SK-N-SH (cell line): ENCODE measurements at regions of chr1 and their contacts with region 1.

Region 1: GRCh38 chr1:22704440-22705067 is 6.1 kb upstream of the EPHB2 start:
- DNase-seq: peak; percentile 83
- H3K4me3 ChIP-seq: no peak overlapping the region; a peak in 1 of 4 replicates
- H3K27ac ChIP-seq: no peak overlapping the region
- H3K4me1 ChIP-seq: peaks cover 2 to 8% of the 10 kb centered on the region in 2 experiments; a peak in 2 of 4 replicates
- H3K27me3 ChIP-seq: no peaks in the 10 kb centered on the region
- CTCF ChIP-seq: peak; percentile 88
- EP300 ChIP-seq: no peak
- RAD21 ChIP-seq: peak; percentile 89

Region 2: GRCh38 chr1:22380024-22380785 is 324.3 kb before region 1 on chr1:
- CTCF ChIA-PET with region 1: no interaction called
- POLR2A ChIA-PET with region 1: no interaction called
- DNase-seq: no peak
- H3K4me3 ChIP-seq: no peak overlapping the region
- H3K27ac ChIP-seq: peak overlapping the region in 1 of 2 experiments; percentile 84; a peak in 2 of 4 replicates
- H3K4me1 ChIP-seq: peaks cover 0 to 15% of the 10 kb centered on the region in 2 experiments; a peak in 1 of 4 replicates
- H3K27me3 ChIP-seq: no peaks in the 10 kb centered on the region
- CTCF ChIP-seq: no peak
- EP300 ChIP-seq: no peak
- RAD21 ChIP-seq: no peak

Region 3: DNA sequence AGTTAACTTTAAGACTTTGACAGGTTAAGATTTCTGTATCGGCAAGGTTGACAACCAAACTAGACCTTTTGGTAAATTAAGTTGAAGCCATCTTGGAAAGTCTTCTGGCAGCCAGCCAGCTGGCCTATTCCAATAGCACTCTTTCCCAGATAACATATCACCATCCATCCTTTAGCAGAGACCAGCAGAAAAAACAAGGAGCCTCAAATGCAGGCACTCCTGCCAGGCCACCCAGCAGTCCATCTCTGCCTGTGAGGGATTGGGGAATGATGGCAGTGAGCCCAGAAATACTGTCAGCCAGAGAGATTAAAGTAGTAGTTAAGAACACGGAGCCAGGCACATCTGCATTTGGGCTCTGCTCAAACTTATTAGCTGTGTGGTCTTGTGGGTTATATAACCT is 233.5 kb before region 1 on chr1:
- CTCF ChIA-PET with region 1: no interaction called
- POLR2A ChIA-PET with region 1: no interaction called
- DNase-seq: peak; percentile 81
- H3K4me3 ChIP-seq: no peak overlapping the region
- H3K27ac ChIP-seq: peak overlapping the region in 1 of 2 experiments; percentile 89; a peak in 2 of 4 replicates
- H3K4me1 ChIP-seq: peaks cover 5 to 31% of the 10 kb centered on the region in 2 experiments; a peak in 2 of 4 replicates
- H3K27me3 ChIP-seq: no peaks in the 10 kb centered on the region
- CTCF ChIP-seq: no peak
- EP300 ChIP-seq: peak in 1 of 2 experiments; percentile 88; a peak in 2 of 4 replicates
- RAD21 ChIP-seq: peak; percentile 27

Region 4: DNA sequence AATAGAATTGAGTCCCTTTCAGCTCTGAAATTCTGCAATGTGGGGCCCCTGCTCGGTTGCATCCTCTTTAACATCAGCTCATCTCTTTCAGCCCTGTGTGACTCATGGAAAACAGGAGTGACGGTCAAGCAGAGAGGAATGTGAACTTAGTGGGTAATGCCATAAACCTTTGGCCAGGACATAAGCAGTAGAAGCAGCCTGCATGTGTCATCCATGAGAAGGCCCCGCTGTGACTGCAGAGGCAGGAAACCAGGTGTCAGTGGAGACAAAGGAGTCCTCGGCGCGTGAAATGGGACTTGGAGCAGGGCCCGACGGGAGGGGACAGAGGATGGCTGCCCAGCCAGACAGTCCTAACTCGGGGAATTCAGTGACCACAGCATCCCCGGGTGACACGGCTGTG is 15.0 kb before region 1 on chr1:
- CTCF ChIA-PET with region 1: interaction called, 36 read pairs
- POLR2A ChIA-PET with region 1: no interaction called
- DNase-seq: no peak
- H3K4me3 ChIP-seq: no peak overlapping the region
- H3K27ac ChIP-seq: peak overlapping the region in 1 of 2 experiments; percentile 74; a peak in 2 of 4 replicates
- H3K4me1 ChIP-seq: peaks cover 6 to 8% of the 10 kb centered on the region in 2 experiments; a peak in 3 of 4 replicates
- H3K27me3 ChIP-seq: no peaks in the 10 kb centered on the region
- CTCF ChIP-seq: no peak
- EP300 ChIP-seq: peak in 1 of 2 experiments; percentile 70; a peak in 1 of 4 replicates
- RAD21 ChIP-seq: no peak

Region 5: GRCh38 chr1:22739648-22740385 is 35.3 kb after region 1 on chr1:
- CTCF ChIA-PET with region 1: interaction called, 10 read pairs
- POLR2A ChIA-PET with region 1: no interaction called
- DNase-seq: no peak
- H3K4me3 ChIP-seq: no peak overlapping the region
- H3K27ac ChIP-seq: peak overlapping the region; percentile 67 to 93; a peak in 3 of 4 replicates
- H3K4me1 ChIP-seq: peaks cover 13 to 24% of the 10 kb centered on the region in 2 experiments; a peak in 3 of 4 replicates
- H3K27me3 ChIP-seq: no peaks in the 10 kb centered on the region
- CTCF ChIP-seq: no peak
- EP300 ChIP-seq: peak in 1 of 2 experiments; percentile 87; a peak in 2 of 4 replicates
- RAD21 ChIP-seq: no peak

Region 6: GRCh38 chr1:22850681-22851080 is 146.1 kb after region 1 on chr1:
- CTCF ChIA-PET with region 1: interaction called, 12 read pairs
- POLR2A ChIA-PET with region 1: no interaction called
- DNase-seq: peak; percentile 67
- H3K4me3 ChIP-seq: no peak overlapping the region
- H3K27ac ChIP-seq: peak overlapping the region in 1 of 2 experiments; percentile 35; a peak in 2 of 4 replicates
- H3K4me1 ChIP-seq: peaks cover 0 to 17% of the 10 kb centered on the region in 2 experiments; a peak in 1 of 4 replicates
- H3K27me3 ChIP-seq: no peaks in the 10 kb centered on the region
- CTCF ChIP-seq: no peak
- EP300 ChIP-seq: no peak
- RAD21 ChIP-seq: no peak

Region 7: GRCh38 chr1:22903113-22903512 is 198.6 kb after region 1 on chr1:
- CTCF ChIA-PET with region 1: interaction called, 15 read pairs
- POLR2A ChIA-PET with region 1: no interaction called
- DNase-seq: no peak
- H3K4me3 ChIP-seq: no peak overlapping the region
- H3K27ac ChIP-seq: no peak overlapping the region
- H3K4me1 ChIP-seq: peaks cover 0 to 6% of the 10 kb centered on the region in 2 experiments; a peak in 2 of 4 replicates
- H3K27me3 ChIP-seq: no peaks in the 10 kb centered on the region
- CTCF ChIP-seq: no peak
- EP300 ChIP-seq: no peak
- RAD21 ChIP-seq: no peak

Region 8: DNA sequence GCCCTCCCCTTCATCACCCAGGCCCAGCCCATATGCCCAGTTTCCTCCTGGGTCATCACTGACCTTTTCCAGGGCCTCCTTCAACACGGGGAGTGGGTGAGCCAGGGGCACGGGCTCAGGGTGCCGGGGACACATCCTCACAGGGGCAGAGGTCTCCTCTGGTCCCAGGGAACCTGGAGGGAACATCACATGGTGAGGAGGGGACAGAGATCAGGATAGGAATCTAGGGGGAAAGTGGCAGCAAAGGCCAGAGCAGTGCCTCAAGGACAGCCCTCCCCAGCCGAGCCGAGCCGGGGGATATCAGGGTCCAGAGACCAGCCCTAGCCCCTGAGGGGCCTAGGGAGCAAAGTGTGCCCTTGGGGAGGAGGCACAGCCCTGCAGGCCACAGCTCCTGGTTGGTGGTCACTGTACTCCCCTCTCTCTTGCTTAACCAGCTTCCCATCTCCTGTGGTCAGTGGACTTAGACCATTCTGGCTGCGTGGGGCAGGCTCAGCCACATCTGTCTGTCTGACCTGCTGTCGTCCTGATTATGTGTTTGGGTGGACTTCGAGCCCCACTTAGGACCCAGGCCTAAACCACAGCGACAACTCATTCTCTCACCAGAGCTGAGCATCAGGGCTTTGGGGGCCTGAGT is 258.6 kb after region 1 on chr1:
- CTCF ChIA-PET with region 1: interaction called, 25 read pairs
- POLR2A ChIA-PET with region 1: no interaction called
- DNase-seq: no peak
- H3K4me3 ChIP-seq: no peak overlapping the region
- H3K27ac ChIP-seq: no peak overlapping the region
- H3K4me1 ChIP-seq: no peaks in the 10 kb centered on the region
- H3K27me3 ChIP-seq: no peaks in the 10 kb centered on the region
- CTCF ChIP-seq: no peak
- EP300 ChIP-seq: no peak
- RAD21 ChIP-seq: no peak

Region 9: GRCh38 chr1:23004112-23004511 is 299.6 kb after region 1 on chr1:
- CTCF ChIA-PET with region 1: no interaction called
- POLR2A ChIA-PET with region 1: no interaction called
- DNase-seq: no peak
- H3K4me3 ChIP-seq: no peak overlapping the region
- H3K27ac ChIP-seq: no peak overlapping the region
- H3K4me1 ChIP-seq: no peaks in the 10 kb centered on the region
- H3K27me3 ChIP-seq: no peaks in the 10 kb centered on the region; the same call in 1 of the 2 replicates
- CTCF ChIP-seq: no peak
- EP300 ChIP-seq: no peak
- RAD21 ChIP-seq: no peak